AG04449 (cell line): ENCODE measurements at regions of chr12 and their contacts with region 1.

Region 1: GRCh38 chr12:120342156-120342555 is 14.6 kb upstream of the PLA2G1B start:
- DNase-seq: no peak
- H3K4me3 ChIP-seq: no peak overlapping the region
- CTCF ChIP-seq: no peak

Region 2: DNA sequence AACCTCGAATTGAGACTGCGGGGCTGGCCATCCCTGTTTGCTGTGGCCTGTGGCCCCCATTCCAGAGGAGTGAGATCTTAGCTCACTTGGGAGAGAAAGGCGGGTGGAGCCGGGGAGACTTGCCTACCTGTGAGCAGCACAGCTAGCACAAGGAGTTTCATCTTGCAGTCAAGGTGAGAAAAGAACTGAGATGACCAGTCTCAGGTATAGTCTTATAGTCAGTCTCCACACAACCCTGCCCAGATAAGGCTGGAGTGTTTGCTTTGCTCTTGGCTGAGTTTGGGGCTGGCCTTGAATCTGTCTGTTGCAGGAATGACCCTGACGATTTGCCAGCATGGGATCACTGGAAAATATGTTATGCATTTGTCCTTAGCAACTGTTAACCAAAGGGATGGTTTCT is 14.6 kb before region 1 on chr12 and contains the start of gene PLA2G1B:
- CTCF ChIA-PET with region 1: interaction called, 11 read pairs
- POLR2A ChIA-PET with region 1: no interaction called
- DNase-seq: no peak
- H3K4me3 ChIP-seq: no peak within 1 kb of the TSS
- CTCF ChIP-seq: no peak

Region 3: DNA sequence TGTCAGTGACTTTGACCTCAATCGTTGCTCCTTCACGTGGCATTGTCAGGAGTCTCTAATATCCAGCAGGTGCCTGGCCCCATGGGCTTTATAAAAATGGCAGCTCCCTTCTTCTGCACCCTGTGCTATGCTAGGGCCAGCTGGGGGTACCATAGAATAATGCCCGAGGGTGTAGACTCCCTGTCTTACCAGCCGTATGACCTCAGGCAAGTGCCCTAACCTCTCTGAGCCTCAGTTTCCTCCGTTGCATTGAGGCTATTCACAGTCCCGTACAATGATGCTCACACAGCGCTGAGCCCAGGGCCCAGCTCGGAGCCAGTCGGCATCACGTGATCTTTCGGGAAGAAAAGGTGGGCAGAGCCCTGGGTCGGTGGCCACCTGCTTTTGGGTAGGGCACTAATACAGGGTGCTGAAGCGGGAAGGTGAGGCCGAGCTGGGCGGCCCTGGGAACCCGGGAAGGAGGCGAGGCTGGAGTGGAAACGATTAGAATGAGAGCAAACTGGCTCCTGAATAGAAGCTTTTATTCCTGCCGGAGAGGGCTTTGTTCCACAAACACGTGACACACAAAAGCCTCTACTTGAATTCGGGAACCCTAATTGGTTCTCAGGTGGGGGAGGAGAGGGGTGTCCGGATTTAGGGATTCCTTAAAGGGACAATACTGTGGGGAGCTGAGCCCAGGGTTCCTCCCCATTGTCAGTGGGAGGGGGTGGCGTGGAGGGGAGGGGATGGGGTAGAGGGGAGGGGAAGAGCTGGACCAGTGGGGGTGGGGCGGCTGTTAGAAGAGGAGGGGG is 46.7 kb after region 1 on chr12:
- CTCF ChIA-PET with region 1: no interaction called
- POLR2A ChIA-PET with region 1: no interaction called
- DNase-seq: no peak
- H3K4me3 ChIP-seq: no peak overlapping the region
- CTCF ChIP-seq: no peak